ENCODE measurements at regions of chr6 and their contacts with region 1.

Region 1: DNA sequence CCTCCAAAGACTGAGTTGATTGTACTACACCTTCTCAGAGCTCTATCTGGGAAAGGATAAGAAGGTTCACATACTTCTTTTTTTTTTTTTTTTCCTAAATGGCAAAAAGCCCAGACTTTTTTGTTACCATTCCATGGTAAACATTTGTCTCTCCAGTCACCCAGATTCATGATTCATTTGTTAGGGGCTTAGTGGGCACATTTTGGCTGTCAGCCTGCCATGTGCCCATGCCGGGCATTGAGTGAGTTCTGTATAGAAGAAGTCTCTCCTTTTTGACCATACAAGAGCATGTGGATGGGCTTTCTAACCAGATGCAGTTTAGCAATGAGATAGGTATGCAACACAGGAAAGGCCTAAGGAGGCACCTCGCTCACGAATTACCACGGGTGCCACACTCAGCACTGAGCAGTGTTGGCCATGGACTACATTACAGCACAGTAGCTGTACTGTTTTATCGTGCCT is 447.5 kb upstream of the HSF2 start:
- DNase-seq: no peak
- H3K4me3 ChIP-seq: no peak overlapping the region
- H3K27ac ChIP-seq: peak overlapping the region; percentile 64 to 77 (median 74)
- H3K4me1 ChIP-seq: peaks cover 0 to 28% (median 23%) of the 10 kb centered on the region in 4 donors
- H3K27me3 ChIP-seq: no peaks in the 10 kb centered on the region
- CTCF ChIP-seq: no peak
- EP300 ChIP-seq: peak; percentile 50
- POLR2A ChIP-seq: no peak

Region 2: DNA sequence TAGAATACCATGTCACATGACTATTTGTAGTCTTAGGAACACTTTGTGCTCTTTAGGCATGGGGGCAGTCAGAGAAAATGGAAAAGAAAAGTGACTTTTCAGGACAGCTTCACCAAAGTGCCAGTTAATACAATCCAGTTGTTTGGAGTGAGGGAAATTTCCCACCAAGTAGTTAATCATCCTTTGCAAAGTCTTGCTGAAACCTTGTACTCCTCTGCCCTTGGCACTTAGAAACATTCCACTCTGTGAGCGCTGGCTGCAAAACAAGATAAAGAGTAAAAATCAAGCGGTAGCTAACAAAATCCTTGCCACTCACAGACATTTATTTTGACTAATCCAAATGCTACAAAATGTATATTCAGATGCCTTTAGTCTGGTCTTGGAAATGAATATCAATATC is 218.3 kb after region 1 on chr6:
- intact Hi-C with region 1: loop called (anchors 10 kb)
- DNase-seq: no peak
- H3K4me3 ChIP-seq: no peak overlapping the region
- H3K27ac ChIP-seq: peak overlapping the region in 2 of 4 donors; percentile 22 to 25
- H3K4me1 ChIP-seq: peaks cover 0 to 10% (median 4%) of the 10 kb centered on the region in 4 donors
- H3K27me3 ChIP-seq: no peaks in the 10 kb centered on the region
- CTCF ChIP-seq: no peak
- EP300 ChIP-seq: no peak
- POLR2A ChIP-seq: no peak